Activated CD4-positive, alpha-beta T cell treated with anti-CD3 and anti-CD28 coated beads for 36 hours (primary cell): ENCODE measurements at regions of chr19 and their contacts with region 1.

Region 1: GRCh38 chr19:18281082-18282020 is at the start of gene JUND:
- DNase-seq: peak; percentile 98
- ATAC-seq: peak; percentile 69
- H3K4me3 Mint-ChIP-seq: peak within 1 kb of the TSS; percentile 86
- H3K27ac Mint-ChIP-seq: peak within 1 kb of the TSS; percentile 98
- H3K4me1 Mint-ChIP-seq: peaks cover 54% of the 10 kb centered on the region
- H3K27me3 Mint-ChIP-seq: no peaks in the 10 kb centered on the region
- total RNA-seq, gene JUND: 254 to 311 TPM

Region 2: DNA sequence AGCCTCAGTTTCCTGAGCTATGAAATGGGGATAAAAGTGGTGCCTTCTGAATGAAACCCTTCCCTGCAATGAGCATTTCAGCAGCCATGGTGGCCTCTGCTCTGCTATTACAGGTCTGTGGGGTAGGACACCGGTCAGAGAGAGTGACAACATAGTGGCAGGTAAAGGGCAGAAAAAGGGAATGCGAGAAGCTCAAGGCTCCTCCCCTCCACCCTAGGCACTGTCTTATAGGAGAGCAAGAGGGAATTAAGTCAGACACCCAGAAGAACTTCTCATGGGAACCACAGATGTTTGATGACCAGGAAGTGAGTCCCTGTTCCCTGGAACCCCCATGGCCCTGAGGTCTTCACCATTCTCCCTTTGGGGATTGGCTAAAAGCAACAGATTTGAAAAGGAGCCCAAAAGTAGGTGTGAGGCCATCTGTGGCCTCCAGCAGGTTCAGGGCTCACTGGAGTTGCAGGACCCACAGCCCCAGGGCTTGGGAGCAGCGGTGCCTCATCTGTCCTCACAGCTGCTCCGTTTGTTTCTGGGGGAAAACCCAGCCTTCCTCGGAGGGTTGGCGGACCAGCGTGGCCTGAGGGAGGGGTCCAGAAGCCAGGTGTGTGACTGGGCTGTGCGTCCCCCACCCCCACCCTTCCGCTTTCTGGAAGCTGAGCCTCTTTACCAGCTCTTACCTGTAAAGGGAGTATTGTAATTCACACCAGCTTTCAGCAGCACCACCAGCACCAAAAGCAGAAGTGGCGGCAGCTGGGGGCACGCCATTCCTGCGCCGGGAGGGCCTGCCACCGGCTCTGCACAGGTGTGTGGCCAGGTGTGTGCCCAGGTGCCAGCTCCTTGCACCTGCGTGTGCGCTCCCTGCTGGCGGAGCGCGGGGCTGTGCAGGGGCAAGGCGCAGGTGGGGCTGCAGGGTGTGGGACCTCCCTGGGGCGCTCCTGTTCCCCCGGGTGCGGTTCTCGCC is 26.5 kb before region 1 on chr19:
- CTCF ChIA-PET with region 1: no interaction called
- POLR2A ChIA-PET with region 1: no interaction called
- intact Hi-C with region 1: no loop called
- DNase-seq: no peak
- ATAC-seq: no peak
- H3K4me3 Mint-ChIP-seq: no peak overlapping the region
- H3K27ac Mint-ChIP-seq: no peak overlapping the region
- H3K4me1 Mint-ChIP-seq: no peaks in the 10 kb centered on the region
- H3K27me3 Mint-ChIP-seq: peaks cover 21% of the 10 kb centered on the region

Region 3: DNA sequence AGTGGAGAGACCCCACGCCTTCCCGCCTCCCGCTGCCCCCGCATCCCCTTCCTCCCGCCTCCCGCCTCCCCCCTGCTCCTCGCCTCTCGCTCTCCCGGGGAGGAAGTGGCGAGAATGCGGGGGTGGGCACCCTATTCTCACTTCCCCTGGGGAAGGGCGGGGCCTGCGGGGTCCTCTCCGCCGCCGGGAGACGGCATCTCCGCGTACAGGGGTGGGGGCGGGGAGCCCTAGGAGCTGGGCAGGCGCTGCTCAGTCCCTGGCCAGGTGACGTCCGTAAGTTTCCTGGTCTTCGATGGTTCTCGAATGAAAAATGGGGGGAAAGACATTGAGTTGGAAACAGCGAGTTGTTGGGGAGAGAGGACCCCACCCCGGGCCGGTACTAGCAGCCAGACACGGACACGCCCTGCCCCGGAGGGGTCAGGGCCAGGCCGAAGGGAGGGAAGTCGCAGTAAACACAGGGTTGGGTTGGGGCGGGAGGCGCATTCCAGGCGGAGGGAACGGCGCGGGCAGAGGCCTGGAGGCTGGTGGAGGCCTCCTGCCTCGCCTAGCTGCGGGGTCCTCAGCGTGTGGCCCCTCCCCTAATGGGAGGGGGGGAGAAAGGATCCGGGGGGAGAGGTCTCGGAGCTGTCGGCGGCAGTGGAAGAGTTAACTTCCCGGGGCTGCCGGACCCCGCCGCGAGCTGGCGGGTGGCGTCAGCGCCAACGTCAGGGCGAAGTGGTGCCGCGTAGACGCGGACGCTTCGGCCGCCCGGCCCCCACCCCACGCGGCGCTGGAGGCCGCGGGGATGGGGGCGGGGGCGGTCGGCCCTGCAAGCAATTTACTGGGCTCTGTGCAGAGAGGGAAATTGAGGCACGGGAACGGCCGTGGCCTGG is 10.5 kb after region 1 on chr19:
- CTCF ChIA-PET with region 1: interaction called, 18 read pairs
- POLR2A ChIA-PET with region 1: interaction called, 291 read pairs
- intact Hi-C with region 1: loop called (anchors 1 kb)
- DNase-seq: peak; percentile 96
- ATAC-seq: peak; percentile 38
- H3K4me3 Mint-ChIP-seq: peak overlapping the region; percentile 87
- H3K27ac Mint-ChIP-seq: peak overlapping the region; percentile 99
- H3K4me1 Mint-ChIP-seq: peaks cover 63% of the 10 kb centered on the region
- H3K27me3 Mint-ChIP-seq: no peaks in the 10 kb centered on the region

Region 4: DNA sequence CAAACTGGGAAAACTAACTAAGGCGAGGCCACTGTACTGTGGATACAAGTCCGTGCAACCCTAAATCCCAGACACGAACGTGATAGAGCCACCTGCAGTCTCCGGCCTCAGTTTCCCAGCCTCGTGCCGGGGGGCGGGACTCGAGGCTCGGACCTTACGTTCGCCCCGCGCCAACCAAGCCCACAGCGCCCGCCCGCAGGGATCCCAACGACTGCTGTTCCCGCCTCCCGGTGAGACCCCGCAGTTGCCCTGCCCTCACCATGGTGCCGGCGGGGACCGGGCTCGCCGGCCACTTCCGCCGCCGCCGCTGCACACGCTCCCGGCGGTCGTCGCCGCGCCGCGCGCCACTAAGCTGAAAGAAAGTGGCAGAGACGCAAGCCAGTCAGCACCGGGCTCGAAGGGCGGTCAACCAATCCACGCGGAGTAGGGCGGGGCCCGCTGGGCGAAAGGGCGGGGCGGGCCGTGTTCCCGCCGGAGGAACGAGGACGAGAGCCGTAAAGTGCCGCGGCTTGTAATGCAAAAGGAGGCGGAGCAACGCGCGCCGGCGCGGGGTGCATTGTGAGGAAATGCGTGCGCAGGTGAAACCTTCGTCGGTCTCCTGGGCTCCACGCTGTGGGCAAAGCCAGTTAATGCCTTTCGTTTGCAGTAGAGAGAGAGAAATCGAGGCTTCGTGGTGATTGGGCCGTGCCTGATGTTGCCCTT is 41.6 kb after region 1 on chr19 and contains the start of gene LSM4:
- CTCF ChIA-PET with region 1: interaction called, 208 read pairs
- POLR2A ChIA-PET with region 1: interaction called, 209 read pairs
- intact Hi-C with region 1: loop called (anchors 1 kb)
- DNase-seq: peak; percentile 100
- ATAC-seq: peak; percentile 94
- H3K4me3 Mint-ChIP-seq: peak within 1 kb of the TSS; percentile 90
- H3K27ac Mint-ChIP-seq: peak within 1 kb of the TSS; percentile 98
- H3K4me1 Mint-ChIP-seq: peaks cover 54% of the 10 kb centered on the region
- H3K27me3 Mint-ChIP-seq: no peaks in the 10 kb centered on the region
- total RNA-seq, gene LSM4: 269 to 370 TPM

Region 5: GRCh38 chr19:18340190-18340989 is 59.0 kb after region 1 on chr19 and contains the start of gene PGPEP1:
- CTCF ChIA-PET with region 1: interaction called, 12 read pairs
- POLR2A ChIA-PET with region 1: interaction called, 16 read pairs
- intact Hi-C with region 1: loop called in 1 of 2 experiments (anchors 1 kb)
- DNase-seq: peak; percentile 78
- ATAC-seq: peak; percentile 53
- H3K4me3 Mint-ChIP-seq: peak within 1 kb of the TSS; percentile 69
- H3K27ac Mint-ChIP-seq: peak within 1 kb of the TSS; percentile 93
- H3K4me1 Mint-ChIP-seq: peaks cover 19% of the 10 kb centered on the region
- H3K27me3 Mint-ChIP-seq: no peaks in the 10 kb centered on the region
- total RNA-seq, gene PGPEP1: 20.0 to 20.9 TPM

Region 6: GRCh38 chr19:18408053-18408476 is 126.7 kb after region 1 on chr19:
- CTCF ChIA-PET with region 1: interaction called, 16 read pairs
- POLR2A ChIA-PET with region 1: no interaction called
- intact Hi-C with region 1: loop called (anchors 2 to 5 kb)
- DNase-seq: peak; percentile 69
- ATAC-seq: peak; percentile 20
- H3K4me3 Mint-ChIP-seq: no peak overlapping the region
- H3K27ac Mint-ChIP-seq: no peak overlapping the region
- H3K4me1 Mint-ChIP-seq: no peaks in the 10 kb centered on the region
- H3K27me3 Mint-ChIP-seq: peaks cover 7% of the 10 kb centered on the region

Region 7: GRCh38 chr19:18464646-18465045 is 183.3 kb after region 1 on chr19:
- CTCF ChIA-PET with region 1: no interaction called
- POLR2A ChIA-PET with region 1: no interaction called
- intact Hi-C with region 1: no loop called
- DNase-seq: no peak
- ATAC-seq: no peak
- H3K4me3 Mint-ChIP-seq: no peak overlapping the region
- H3K27ac Mint-ChIP-seq: peak overlapping the region; percentile 80
- H3K4me1 Mint-ChIP-seq: peaks cover 11% of the 10 kb centered on the region
- H3K27me3 Mint-ChIP-seq: no peaks in the 10 kb centered on the region

Region 8: DNA sequence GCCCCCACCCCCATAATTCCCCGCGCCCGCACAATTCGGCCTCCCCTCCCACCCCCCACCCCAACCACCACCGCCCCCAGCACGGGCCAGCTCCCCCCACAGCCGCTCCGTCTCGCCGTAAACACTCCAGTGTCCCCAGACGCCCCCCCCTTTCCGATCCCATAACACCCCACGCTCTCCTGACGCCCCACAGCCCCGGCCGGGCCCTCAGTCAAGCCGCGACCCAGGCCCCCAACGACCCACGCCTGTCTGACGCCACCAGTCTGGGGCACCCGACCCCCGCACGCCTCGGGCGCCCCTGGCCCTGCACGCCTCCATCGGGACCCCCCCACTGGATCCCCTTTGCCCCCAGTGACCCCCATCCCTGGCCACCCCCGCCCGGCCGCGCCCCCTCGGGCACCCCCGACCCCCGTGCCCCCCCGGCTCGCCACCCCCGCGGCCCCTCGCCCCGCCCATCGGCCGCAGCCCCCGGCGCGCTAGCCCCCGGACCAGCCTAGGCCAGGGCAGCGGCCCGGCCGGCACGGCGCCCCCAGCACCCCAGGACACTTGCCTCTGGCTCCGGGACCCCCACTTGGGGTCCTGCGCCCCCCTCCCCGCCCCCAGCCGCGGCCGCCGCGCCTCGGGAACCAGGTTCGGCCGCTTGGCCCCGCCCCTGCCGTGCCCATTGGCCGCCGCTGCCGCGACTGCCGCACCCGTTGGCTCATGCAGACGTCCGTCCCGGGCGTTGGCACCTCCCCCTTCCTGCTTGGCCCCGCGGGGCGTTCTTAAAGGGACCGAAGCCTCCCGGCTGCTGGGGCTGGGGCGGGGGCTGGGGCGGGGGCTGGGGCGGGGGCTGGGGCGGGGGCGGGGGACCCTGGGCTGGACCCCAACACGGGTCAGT is 261.8 kb after region 1 on chr19 and contains the start of gene FKBP8:
- CTCF ChIA-PET with region 1: no interaction called
- POLR2A ChIA-PET with region 1: no interaction called
- intact Hi-C with region 1: loop called in 1 of 2 experiments (anchors 5 kb)
- DNase-seq: peak; percentile 98
- ATAC-seq: peak; percentile 92
- H3K4me3 Mint-ChIP-seq: peak within 1 kb of the TSS; percentile 92
- H3K27ac Mint-ChIP-seq: peak within 1 kb of the TSS; percentile 98
- H3K4me1 Mint-ChIP-seq: peaks cover 25% of the 10 kb centered on the region
- H3K27me3 Mint-ChIP-seq: no peaks in the 10 kb centered on the region
- total RNA-seq, gene FKBP8: 208 to 211 TPM